Activated CD4-positive, alpha-beta T cell treated with anti-CD3 and anti-CD28 coated beads, Interleukin-2, amount 10 ng/mL, durations not matched to agents 24 days and 14 days (primary cell): ENCODE measurements at regions of chr21 and their contacts with region 1.

Region 1: DNA sequence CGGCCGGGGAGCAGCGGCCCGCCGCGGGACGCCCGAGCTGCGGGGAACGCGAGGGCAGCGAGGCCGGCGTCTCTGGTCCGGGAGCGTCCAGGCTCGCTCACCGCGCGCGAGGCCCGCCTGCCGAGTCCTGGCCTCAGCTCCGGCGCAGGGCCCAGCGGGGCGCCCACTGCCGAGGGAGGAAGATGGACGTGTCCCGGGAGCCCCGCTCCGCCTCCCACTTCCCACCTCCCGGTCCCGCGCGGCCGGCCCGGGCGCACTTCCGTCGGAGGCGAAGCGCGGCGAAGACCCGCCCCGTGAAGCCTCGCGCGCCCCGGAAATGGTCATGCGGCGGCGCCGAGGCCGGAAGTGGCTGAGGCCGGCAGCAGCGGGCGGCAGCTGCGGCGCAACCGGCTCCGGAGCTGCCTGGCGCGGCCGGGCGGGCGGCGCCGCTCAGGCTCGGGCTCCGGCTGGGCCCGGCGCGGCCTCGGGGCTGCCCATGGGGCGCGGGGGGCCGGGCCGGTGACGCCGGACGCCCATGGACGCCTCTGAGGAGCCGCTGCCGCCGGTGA is at the start of gene TRAPPC10:
- DNase-seq: peak; percentile 97
- H3K4me3 Mint-ChIP-seq: peak within 1 kb of the TSS; percentile 94
- H3K27ac Mint-ChIP-seq: peak within 1 kb of the TSS; percentile 93
- H3K4me1 Mint-ChIP-seq: peaks cover 44% of the 10 kb centered on the region
- H3K27me3 Mint-ChIP-seq: peaks cover 3% of the 10 kb centered on the region
- total RNA-seq, gene TRAPPC10: 69.6 and 75.0 TPM in 2 replicates

Region 2: GRCh38 chr21:43789276-43790009 is 222.6 kb before region 1 on chr21 and contains the start of gene RRP1:
- intact Hi-C with region 1: loop called (anchors 1 kb)
- DNase-seq: peak; percentile 99
- H3K4me3 Mint-ChIP-seq: peak within 1 kb of the TSS; percentile 93
- H3K27ac Mint-ChIP-seq: peak within 1 kb of the TSS; percentile 90
- H3K4me1 Mint-ChIP-seq: peaks cover 20% of the 10 kb centered on the region
- H3K27me3 Mint-ChIP-seq: no peaks in the 10 kb centered on the region
- total RNA-seq, gene RRP1: 94.4 and 99.4 TPM in 2 replicates

Region 3: DNA sequence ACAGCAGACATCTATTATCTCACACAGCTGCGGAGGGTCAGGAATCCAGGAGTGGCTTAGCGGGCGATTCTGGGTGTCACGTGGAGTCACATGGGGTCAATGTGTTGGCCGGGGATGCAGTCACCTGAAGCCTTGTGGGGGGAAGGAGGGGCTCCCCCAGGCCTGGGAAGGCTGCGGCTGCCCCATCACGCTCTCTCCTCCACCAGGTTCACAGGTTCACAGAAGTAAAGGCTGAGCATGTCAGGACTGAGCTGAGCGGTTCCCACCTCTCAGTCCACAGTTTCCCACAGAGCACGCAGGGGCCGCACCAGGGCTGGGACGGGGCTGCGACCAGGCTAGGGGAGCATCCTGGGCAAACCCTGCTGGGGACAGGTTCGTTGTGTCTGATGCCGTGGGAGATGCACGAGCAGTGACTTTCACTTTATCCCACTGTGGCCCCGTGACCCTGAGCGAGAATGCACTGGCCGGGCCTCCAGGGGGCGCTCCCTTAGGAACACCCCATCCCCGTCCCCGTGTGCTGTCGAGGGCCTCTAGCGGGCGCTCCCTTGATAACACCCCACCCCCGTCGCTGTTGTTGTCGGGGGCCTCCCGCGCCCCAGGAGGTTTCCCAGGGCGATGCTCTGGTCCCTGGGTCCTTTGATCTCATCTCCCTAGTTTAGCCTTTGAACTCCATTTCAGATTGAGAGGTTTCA is 73.2 kb before region 1 on chr21:
- intact Hi-C with region 1: no loop called
- DNase-seq: peak; percentile 97
- H3K4me3 Mint-ChIP-seq: peak overlapping the region; percentile 74
- H3K27ac Mint-ChIP-seq: peak overlapping the region; percentile 78
- H3K4me1 Mint-ChIP-seq: peaks cover 18% of the 10 kb centered on the region
- H3K27me3 Mint-ChIP-seq: no peaks in the 10 kb centered on the region

Region 4: DNA sequence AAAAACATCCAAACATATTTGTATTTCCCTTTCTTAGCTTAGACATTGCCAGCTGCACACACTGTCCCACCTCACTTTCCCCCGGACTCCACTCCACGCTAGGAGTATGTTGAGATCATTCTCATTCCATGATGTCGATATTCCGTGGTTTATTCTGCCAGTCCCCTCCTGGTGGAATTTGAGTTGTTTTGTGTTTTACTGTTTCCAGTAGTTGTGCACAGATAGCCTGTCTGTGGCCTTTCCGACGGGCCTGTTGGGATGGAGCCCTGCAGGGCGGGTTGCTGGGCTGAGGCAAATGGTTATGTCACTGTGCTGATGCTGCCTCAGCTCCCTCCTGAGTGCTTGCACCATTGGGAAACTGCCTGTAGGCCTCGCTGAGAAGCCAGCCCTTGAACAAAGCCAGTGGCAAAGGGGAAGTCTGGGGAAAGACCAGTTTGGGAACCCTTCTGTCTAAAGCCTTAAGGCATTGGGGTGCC is 12.9 kb after region 1 on chr21:
- intact Hi-C with region 1: loop called (anchors 1 kb)
- DNase-seq: no peak
- H3K4me3 Mint-ChIP-seq: peak overlapping the region; percentile 69
- H3K27ac Mint-ChIP-seq: peak overlapping the region; percentile 92
- H3K4me1 Mint-ChIP-seq: peaks cover 50% of the 10 kb centered on the region
- H3K27me3 Mint-ChIP-seq: no peaks in the 10 kb centered on the region

Region 5: GRCh38 chr21:44083631-44084291 is 71.7 kb after region 1 on chr21:
- intact Hi-C with region 1: loop called (anchors 1 kb)
- DNase-seq: peak; percentile 90
- H3K4me3 Mint-ChIP-seq: peak overlapping the region; percentile 76
- H3K27ac Mint-ChIP-seq: peak overlapping the region; percentile 97
- H3K4me1 Mint-ChIP-seq: peaks cover 80% of the 10 kb centered on the region
- H3K27me3 Mint-ChIP-seq: no peaks in the 10 kb centered on the region